Endothelial cell of umbilical vein (primary cell): ENCODE measurements at regions of chr11 and their contacts with region 1.

Region 1: DNA sequence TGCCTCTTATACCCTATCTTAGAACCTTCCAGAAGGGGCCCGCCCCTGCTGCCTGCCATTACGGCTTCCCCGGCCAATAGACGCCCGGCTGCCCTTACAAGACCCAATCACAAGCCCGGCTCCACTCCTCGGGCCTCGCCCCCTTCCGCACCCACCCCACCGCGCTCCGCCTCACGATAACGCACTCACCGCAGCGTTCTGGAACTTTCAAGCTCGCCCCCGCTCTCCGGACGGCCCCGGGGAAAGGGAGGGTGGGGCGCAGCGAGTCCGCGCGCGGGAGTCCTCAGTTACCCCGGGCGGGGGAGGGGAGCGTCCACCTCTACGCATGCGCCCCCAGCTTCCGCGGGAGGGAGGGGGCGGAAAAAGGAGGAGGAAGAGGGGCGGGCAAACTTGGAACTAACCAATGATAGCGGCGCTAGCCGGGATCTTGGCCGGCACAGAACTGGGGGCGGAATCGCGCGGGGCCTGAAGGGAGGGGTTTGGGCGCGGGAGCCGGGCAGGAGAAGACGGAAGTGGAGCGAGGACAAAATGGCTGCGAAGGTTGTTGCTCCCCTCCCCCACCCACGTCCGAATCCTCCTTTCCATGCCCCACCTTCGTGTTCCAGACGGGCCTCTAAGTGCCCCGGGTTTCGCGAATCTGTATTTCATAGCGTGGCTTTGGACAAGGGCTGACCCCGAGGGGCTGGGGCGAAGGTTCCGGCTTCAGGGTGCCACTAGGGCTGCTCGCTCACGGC is 389 bp upstream of the HSPA8 start:
- DNase-seq: peak; percentile 100
- H3K4me3 ChIP-seq: peak overlapping the region; percentile 66 to 95 (median 91)
- H3K27ac ChIP-seq: peak overlapping the region; percentile 96
- H3K4me1 ChIP-seq: peaks cover 29% of the 10 kb centered on the region
- H3K27me3 ChIP-seq: no peaks in the 10 kb centered on the region
- CTCF ChIP-seq: no peak
- POLR2A ChIP-seq: no peak

Region 2: GRCh38 chr11:122197055-122197987 is 865.0 kb before region 1 on chr11:
- CTCF ChIA-PET with region 1: no interaction called
- POLR2A ChIA-PET with region 1: no interaction called
- dilution Hi-C with region 1: no loop called
- intact Hi-C with region 1: loop called (anchors 10 kb)
- DNase-seq: peak; percentile 96
- H3K4me3 ChIP-seq: peak overlapping the region in 1 of 3 experiments; percentile 26
- H3K27ac ChIP-seq: peak overlapping the region; percentile 95
- H3K4me1 ChIP-seq: peaks cover 69% of the 10 kb centered on the region
- H3K27me3 ChIP-seq: no peaks in the 10 kb centered on the region
- CTCF ChIP-seq: no peak
- POLR2A ChIP-seq: peak; percentile 82

Region 3: GRCh38 chr11:122721964-122722266 is 340.4 kb before region 1 on chr11:
- CTCF ChIA-PET with region 1: no interaction called
- POLR2A ChIA-PET with region 1: no interaction called
- dilution Hi-C with region 1: no loop called
- intact Hi-C with region 1: loop called (anchors 5 kb)
- DNase-seq: peak; percentile 70
- H3K4me3 ChIP-seq: no peak overlapping the region
- H3K27ac ChIP-seq: no peak overlapping the region
- H3K4me1 ChIP-seq: peaks cover 30% of the 10 kb centered on the region
- H3K27me3 ChIP-seq: no peaks in the 10 kb centered on the region
- CTCF ChIP-seq: no peak
- POLR2A ChIP-seq: no peak

Region 4: DNA sequence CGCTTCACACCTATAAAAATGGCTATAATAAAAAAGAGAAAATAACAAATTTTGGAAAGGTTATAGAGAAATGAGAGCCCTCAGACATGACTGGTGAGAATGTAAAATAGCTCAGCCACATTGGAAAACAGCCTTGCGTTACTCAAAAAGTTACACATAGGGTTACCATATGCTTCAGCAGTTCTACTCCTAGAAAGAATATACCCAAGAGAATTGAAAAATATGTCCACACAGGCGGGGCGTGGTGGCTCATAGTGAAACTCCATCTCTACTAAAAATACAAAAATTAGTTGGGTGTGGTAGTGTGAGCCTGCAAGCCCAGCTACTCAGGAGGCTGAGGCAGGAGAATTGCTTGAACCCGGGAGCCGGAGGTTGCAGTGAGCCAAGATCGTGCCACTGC is 187.3 kb before region 1 on chr11:
- CTCF ChIA-PET with region 1: no interaction called
- POLR2A ChIA-PET with region 1: no interaction called
- dilution Hi-C with region 1: no loop called
- intact Hi-C with region 1: no loop called
- DNase-seq: no peak
- H3K4me3 ChIP-seq: no peak overlapping the region
- H3K27ac ChIP-seq: no peak overlapping the region
- H3K4me1 ChIP-seq: no peaks in the 10 kb centered on the region
- H3K27me3 ChIP-seq: peaks cover 2 to 4% of the 10 kb centered on the region in 2 experiments
- CTCF ChIP-seq: no peak
- POLR2A ChIP-seq: no peak

Region 5: GRCh38 chr11:123083623-123084029 is 21.3 kb after region 1 on chr11:
- CTCF ChIA-PET with region 1: interaction called, 4 read pairs
- POLR2A ChIA-PET with region 1: interaction called, 11 read pairs
- dilution Hi-C with region 1: no loop called
- intact Hi-C with region 1: loop called (anchors 1 kb)
- DNase-seq: peak; percentile 96
- H3K4me3 ChIP-seq: no peak overlapping the region
- H3K27ac ChIP-seq: peak overlapping the region; percentile 74
- H3K4me1 ChIP-seq: peaks cover 15% of the 10 kb centered on the region
- H3K27me3 ChIP-seq: no peaks in the 10 kb centered on the region
- CTCF ChIP-seq: no peak
- POLR2A ChIP-seq: no peak

Region 6: GRCh38 chr11:123219066-123219690 is 156.9 kb after region 1 on chr11:
- CTCF ChIA-PET with region 1: no interaction called
- POLR2A ChIA-PET with region 1: no interaction called
- dilution Hi-C with region 1: no loop called
- intact Hi-C with region 1: no loop called
- DNase-seq: no peak
- H3K4me3 ChIP-seq: no peak overlapping the region
- H3K27ac ChIP-seq: no peak overlapping the region
- H3K4me1 ChIP-seq: peaks cover 9% of the 10 kb centered on the region
- H3K27me3 ChIP-seq: no peaks in the 10 kb centered on the region
- CTCF ChIP-seq: no peak
- POLR2A ChIP-seq: no peak

Region 7: GRCh38 chr11:123429913-123430720 is 367.8 kb after region 1 on chr11 and contains the start of gene GRAMD1B:
- CTCF ChIA-PET with region 1: no interaction called
- POLR2A ChIA-PET with region 1: no interaction called
- dilution Hi-C with region 1: no loop called
- intact Hi-C with region 1: loop called (anchors 5 kb)
- DNase-seq: peak; percentile 66
- H3K4me3 ChIP-seq: peak within 1 kb of the TSS; percentile 37 to 63 (median 61)
- H3K27ac ChIP-seq: peak within 1 kb of the TSS; percentile 3
- H3K4me1 ChIP-seq: peaks cover 11% of the 10 kb centered on the region
- H3K27me3 ChIP-seq: peaks cover 14% of the 10 kb centered on the region in 2 experiments
- CTCF ChIP-seq: peak in 1 of 2 donors; percentile 25
- POLR2A ChIP-seq: no peak
- total RNA-seq, gene GRAMD1B: 6.8 and 11.1 TPM in 2 replicates